ENCODE measurements at regions of chr11 and their contacts with region 1.

Region 1: DNA sequence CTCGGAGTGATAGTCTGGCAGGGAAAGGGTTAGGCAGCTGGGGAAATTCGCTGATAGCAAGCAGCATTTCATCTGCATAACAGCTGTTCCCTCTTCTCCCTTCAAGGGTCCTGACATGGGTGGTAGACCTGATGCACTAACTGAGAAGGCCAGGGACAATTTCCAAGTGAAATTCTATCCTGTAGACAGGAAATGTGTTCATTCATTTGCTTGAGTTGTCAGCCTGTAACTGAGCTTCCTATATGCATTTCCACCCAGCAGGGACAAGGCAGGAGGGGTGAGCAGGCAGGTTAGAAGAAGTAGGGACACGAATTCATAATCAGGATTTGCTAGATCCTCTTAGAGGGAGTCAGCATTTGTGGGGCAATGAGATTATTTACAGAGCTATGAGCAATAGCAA is 154.3 kb upstream of the NCAM1 start:
- DNase-seq: no peak
- ATAC-seq: no peak
- H3K4me3 ChIP-seq: no peak overlapping the region
- H3K27ac ChIP-seq: no peak overlapping the region
- H3K4me1 ChIP-seq: peaks cover 0 to 15% (median 0%) of the 10 kb centered on the region in 12 donors
- H3K27me3 ChIP-seq: no peaks in the 10 kb centered on the region
- CTCF ChIP-seq: no peak
- POLR2A ChIP-seq: no peak

Region 2: DNA sequence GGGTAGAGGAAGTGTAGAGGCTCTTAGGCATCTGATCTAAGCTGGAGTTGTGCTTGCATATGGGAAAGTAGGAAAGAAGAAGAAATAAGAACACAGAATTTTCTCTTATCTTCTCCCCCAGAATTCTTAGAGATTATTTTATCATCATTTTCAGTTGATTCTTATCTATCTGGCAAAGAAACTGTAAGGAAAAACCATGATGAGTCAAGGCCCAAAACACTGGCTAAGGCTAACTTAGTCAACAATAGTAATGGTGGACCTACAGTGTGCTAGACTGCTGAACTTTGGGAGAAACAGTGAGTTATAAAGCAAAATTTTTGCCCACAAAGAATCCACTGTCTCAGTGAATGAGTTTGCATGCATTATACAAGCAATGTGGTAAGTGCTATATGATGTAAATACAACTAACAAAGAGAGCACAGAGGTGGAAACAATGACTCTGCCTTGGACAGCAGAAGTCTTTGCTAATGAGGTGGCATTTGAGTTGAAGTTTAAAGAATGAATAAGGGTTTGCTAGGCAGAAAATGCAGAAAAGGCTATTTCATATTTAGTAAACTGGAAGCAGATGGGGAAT is 201.7 kb before region 1 on chr11:
- intact Hi-C with region 1: loop called in 1 of 10 experiments (anchors 10 kb)
- DNase-seq: no peak
- ATAC-seq: no peak
- H3K4me3 ChIP-seq: no peak overlapping the region
- H3K27ac ChIP-seq: no peak overlapping the region
- H3K4me1 ChIP-seq: peaks cover 0 to 9% (median 0%) of the 10 kb centered on the region in 12 donors
- H3K27me3 ChIP-seq: no peaks in the 10 kb centered on the region
- CTCF ChIP-seq: no peak
- POLR2A ChIP-seq: no peak